AG04449 (cell line): ENCODE measurements at regions of chr1 and their contacts with region 1.

Region 1: GRCh38 chr1:224851210-224851847 is 78.1 kb upstream of the DNAH14 start:
- DNase-seq: no peak
- H3K4me3 ChIP-seq: no peak overlapping the region
- CTCF ChIP-seq: peak; percentile 79

Region 2: DNA sequence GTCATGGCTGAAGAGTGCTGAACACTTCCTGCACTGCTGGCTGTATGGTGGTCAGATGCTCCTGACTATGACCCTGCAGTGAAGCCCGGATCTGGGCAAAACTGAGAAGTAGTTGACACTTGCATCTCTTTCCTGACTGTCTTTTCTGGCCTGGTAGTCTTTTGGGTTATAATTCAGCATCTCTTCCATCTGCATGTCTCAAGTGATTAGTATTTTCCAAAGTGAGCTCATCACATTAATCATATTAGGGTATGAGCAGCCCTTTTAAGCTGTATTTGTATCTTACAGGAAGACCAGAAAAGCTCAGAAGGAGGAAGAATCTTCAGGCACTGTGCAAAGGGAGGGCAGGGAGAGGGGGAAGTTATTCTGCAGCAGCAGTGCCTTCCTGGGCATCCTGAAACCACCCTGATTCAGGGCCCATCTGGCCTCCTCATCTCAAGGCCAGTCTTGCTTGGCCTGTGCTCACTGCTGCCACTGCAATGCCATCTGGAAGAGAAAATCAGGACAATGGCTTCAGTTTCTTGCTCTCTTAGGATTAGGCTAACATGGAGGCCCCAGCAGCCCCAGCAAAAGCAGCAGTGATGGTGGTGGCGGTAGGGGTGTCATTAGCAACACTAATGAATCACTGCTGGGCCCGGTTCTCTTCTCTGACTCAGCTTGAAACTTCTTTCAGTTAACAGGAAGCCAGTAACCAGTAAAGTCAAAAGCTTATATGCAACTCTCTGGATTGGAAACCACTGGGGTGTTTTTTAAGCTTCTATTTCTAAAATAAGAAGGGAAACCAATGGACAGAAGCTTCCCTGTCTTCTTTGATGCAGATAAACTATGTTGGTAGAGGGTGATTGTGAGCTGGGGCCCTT is 353.4 kb before region 1 on chr1:
- CTCF ChIA-PET with region 1: interaction called, 44 read pairs
- POLR2A ChIA-PET with region 1: no interaction called
- DNase-seq: peak; percentile 51
- H3K4me3 ChIP-seq: no peak overlapping the region
- CTCF ChIP-seq: no peak

Region 3: DNA sequence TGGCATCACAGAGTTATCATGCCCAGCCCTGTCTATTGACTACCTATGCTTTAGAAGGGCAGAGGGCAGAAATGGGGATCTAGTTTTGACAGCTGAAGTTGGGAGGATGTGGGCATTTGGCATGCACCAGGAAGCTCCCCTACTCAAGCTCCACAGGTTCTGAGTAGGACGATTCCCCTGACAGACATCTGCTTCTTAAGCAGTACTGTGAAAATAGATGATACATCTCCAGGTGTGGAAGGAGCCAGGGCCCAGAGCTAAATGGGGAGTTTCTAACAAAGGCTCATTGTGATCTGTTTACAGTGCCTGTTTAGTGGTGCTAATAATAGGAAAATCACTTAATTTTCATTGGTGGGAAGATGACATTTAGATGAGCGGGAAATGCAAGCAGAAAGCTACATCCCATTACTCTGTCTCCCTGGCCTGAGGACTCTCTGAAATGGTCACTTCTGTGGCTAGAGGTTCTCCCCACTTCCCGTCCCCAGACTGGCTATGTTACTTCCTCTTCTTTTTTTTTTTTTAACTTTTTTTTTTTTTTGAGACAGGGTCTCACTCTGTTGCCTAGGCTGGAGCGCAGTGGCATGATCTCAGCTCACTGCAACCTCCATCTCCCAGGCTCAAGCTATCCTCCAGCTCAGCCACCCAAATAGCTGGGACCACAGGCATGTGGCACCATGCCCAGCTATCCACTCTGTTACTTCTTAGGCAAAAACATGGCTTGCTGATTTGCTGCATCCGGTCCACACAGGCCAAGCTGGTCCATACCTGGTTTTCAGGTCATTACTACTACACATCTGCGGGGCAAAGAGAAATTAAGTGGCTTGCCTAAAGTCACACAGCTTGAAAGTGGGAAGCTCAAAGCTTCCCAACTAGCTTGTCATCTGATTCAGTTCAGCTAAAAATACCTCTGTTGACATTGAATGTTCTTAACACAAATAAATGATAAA is 258.4 kb before region 1 on chr1:
- CTCF ChIA-PET with region 1: interaction called, 21 read pairs
- POLR2A ChIA-PET with region 1: no interaction called
- DNase-seq: peak; percentile 57
- H3K4me3 ChIP-seq: no peak overlapping the region
- CTCF ChIP-seq: no peak

Region 4: DNA sequence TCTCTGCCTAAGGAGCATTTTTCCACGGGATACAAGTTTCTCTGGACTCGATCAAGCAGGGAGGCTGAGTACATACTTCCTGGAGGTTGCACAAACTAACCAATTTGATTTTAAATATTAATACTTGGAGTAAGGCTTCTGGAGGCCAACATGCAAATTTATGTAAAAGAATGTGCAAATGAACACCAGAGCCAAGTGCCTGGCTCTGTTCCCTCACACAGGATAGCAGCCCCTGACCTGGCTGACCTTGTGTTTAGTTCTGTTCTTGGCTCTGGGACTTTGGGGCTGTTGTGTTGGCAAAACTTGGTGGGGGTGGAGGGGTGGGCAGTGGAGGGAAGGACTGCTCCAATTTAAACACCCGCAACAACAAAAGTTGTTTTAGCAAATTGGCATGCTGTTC is 201.0 kb before region 1 on chr1:
- CTCF ChIA-PET with region 1: interaction called, 240 read pairs
- POLR2A ChIA-PET with region 1: no interaction called
- DNase-seq: no peak
- H3K4me3 ChIP-seq: no peak overlapping the region
- CTCF ChIP-seq: no peak

Region 5: GRCh38 chr1:224736619-224737352 is 114.5 kb before region 1 on chr1:
- CTCF ChIA-PET with region 1: interaction called, 11 read pairs
- POLR2A ChIA-PET with region 1: no interaction called
- DNase-seq: no peak
- H3K4me3 ChIP-seq: no peak overlapping the region
- CTCF ChIP-seq: no peak

Region 6: GRCh38 chr1:224795591-224795990 is 55.7 kb before region 1 on chr1:
- CTCF ChIA-PET with region 1: no interaction called
- POLR2A ChIA-PET with region 1: no interaction called
- DNase-seq: no peak
- H3K4me3 ChIP-seq: no peak overlapping the region
- CTCF ChIP-seq: no peak

Region 7: GRCh38 chr1:224863970-224864369 is 12.6 kb after region 1 on chr1:
- CTCF ChIA-PET with region 1: interaction called, 91 read pairs
- POLR2A ChIA-PET with region 1: no interaction called
- DNase-seq: no peak
- H3K4me3 ChIP-seq: no peak overlapping the region
- CTCF ChIP-seq: no peak

Region 8: GRCh38 chr1:224922404-224923164 is 71.3 kb after region 1 on chr1:
- CTCF ChIA-PET with region 1: interaction called, 22 read pairs
- POLR2A ChIA-PET with region 1: no interaction called
- DNase-seq: no peak
- H3K4me3 ChIP-seq: no peak overlapping the region
- CTCF ChIP-seq: peak; percentile 56

Region 9: GRCh38 chr1:224959115-224959514 is 107.8 kb after region 1 on chr1:
- CTCF ChIA-PET with region 1: no interaction called
- POLR2A ChIA-PET with region 1: no interaction called
- DNase-seq: no peak
- H3K4me3 ChIP-seq: no peak overlapping the region
- CTCF ChIP-seq: no peak

Region 10: GRCh38 chr1:225004396-225004795 is 153.1 kb after region 1 on chr1:
- CTCF ChIA-PET with region 1: no interaction called
- POLR2A ChIA-PET with region 1: no interaction called
- DNase-seq: no peak
- H3K4me3 ChIP-seq: no peak overlapping the region
- CTCF ChIP-seq: no peak